ENCODE measurements at regions of chr9 and their contacts with region 1.

Region 1: GRCh38 chr9:91711755-91712601 is 238.1 kb downstream of the ROR2 start:
- DNase-seq: peak; percentile 54
- ATAC-seq: peak; percentile 94
- H3K4me3 Mint-ChIP-seq: no peak overlapping the region
- H3K27ac Mint-ChIP-seq: no peak overlapping the region
- H3K4me1 Mint-ChIP-seq: peaks cover 6% of the 10 kb centered on the region
- H3K27me3 Mint-ChIP-seq: no peaks in the 10 kb centered on the region
- CTCF ChIP-seq: no peak

Region 2: DNA sequence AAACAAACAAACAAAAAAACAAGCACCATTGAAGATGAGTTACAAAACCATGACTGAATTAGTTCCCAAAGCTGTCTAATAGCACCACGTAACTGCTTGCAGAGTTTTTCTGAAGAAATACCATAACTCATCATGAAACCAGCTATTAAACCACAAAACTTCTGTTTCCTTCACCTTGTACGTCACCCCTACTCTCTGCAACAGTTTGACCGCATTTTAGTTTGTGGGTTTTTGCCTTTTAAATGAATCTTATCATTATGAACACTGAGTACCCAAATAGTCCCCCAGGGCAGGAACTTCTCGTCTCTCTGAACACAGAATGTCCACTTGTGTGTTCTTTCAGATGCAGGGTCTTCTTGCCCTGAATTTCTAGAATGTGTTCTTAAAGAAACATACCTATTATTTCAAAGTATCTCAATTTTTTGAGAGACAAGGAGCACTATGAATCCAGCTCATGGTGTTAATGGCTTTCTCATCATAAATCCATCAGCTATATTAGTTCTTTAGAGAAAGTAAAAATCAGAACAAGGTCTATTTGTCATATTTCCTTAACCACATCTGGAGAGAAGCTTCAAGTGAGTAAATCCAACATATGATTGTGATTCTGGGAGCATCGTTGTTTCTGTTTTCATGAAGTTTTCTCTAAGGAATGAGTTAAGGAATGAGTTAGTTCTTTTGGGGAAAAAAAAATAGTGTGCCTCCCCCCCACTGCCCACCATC is 560.8 kb before region 1 on chr9:
- CTCF ChIA-PET with region 1: no interaction called
- POLR2A ChIA-PET with region 1: no interaction called
- intact Hi-C with region 1: loop called (anchors 2 kb)
- DNase-seq: no peak
- ATAC-seq: peak; percentile 77
- H3K4me3 Mint-ChIP-seq: peak overlapping the region; percentile 30
- H3K27ac Mint-ChIP-seq: peak overlapping the region; percentile 62
- H3K4me1 Mint-ChIP-seq: peaks cover 50% of the 10 kb centered on the region
- H3K27me3 Mint-ChIP-seq: no peaks in the 10 kb centered on the region
- CTCF ChIP-seq: no peak

Region 3: DNA sequence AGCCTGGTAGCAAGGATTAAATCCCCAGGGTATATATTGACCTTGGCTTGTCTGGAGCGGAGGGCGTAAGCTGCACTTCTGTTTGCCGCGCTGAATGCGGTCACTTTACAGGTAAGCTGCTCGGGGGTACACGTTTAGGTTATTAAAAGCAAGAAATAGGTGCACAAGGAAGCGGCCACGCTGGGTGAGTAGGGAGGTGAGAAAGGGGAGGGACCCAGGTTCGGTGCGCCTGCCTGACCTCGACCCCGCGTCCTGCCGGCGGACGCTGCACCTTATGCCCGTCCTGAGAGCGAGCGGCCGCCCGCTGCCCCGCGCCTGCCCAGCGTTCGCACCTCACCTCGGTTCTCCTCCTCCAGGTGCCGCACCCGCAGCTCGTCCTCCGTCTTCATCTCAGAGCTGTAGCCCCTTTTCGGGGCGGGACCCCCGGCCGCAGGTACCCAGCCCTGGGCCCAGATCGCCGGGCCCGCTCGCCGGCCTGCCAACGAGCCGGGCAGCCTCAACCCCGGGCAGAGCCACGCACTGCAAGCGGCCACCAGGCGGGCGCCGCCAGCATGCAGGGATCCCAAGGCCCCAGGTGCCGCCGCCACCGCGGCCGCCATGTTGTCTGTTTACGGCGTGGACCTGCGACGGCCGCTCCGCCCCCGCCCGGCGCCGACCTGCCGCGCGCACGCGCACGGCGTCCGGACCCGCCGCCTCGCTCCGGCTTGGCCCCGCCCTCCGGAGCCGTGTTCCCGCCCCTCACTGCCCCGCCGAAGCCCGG is 350.5 kb before region 1 on chr9 and contains the start of gene AUH:
- CTCF ChIA-PET with region 1: no interaction called
- POLR2A ChIA-PET with region 1: no interaction called
- intact Hi-C with region 1: loop called (anchors 5 kb)
- DNase-seq: peak; percentile 89
- ATAC-seq: peak; percentile 97
- H3K4me3 Mint-ChIP-seq: peak within 1 kb of the TSS; percentile 94
- H3K27ac Mint-ChIP-seq: peak within 1 kb of the TSS; percentile 89
- H3K4me1 Mint-ChIP-seq: peaks cover 34% of the 10 kb centered on the region
- H3K27me3 Mint-ChIP-seq: no peaks in the 10 kb centered on the region
- CTCF ChIP-seq: no peak
- total RNA-seq, gene AUH: 11.1 and 14.0 TPM in 2 replicates

Region 4: DNA sequence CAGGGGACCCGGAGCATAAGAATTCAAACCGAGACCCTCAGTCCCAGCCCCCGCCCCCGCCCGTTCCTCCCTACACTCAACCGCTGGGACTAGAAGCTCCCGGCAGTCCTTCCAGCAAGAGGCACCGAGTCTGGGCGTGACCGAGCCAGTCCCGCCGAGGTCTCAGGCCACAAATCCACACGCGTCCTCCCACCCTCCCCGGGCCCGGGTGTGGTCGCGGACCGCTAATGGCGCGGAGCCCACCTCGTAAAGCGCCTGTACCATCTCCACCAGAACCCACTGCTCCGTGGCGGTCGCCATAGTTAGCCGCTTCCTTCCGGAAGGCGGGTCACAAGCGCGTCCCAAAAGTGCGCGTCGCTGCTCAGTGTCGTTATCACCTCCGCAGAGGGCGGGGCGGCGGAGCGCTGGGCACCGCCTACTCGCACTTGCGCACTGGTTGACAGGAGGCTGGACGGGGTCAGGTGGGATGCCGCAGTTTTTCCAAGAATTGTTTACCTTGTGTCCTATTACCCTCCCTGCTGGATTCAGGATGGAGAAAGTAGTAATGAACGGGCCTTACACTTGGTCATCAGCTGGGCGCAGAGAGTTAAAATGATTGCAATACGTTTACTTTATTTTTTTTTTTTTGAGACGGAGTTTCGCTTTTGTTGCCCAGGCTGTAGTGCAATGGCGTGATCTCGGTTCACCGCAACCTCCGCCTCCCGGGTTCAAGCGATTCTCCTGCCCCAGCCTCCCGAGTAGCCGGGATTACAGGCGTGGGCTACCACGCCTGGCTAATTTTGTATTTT is 403.3 kb after region 1 on chr9 and contains the start of gene SPTLC1:
- CTCF ChIA-PET with region 1: no interaction called
- POLR2A ChIA-PET with region 1: no interaction called
- intact Hi-C with region 1: loop called (anchors 10 kb)
- DNase-seq: peak; percentile 93
- ATAC-seq: peak; percentile 98
- H3K4me3 Mint-ChIP-seq: peak within 1 kb of the TSS; percentile 100
- H3K27ac Mint-ChIP-seq: peak within 1 kb of the TSS; percentile 99
- H3K4me1 Mint-ChIP-seq: peaks cover 24% of the 10 kb centered on the region
- H3K27me3 Mint-ChIP-seq: no peaks in the 10 kb centered on the region
- CTCF ChIP-seq: no peak
- total RNA-seq, gene SPTLC1: 40.8 and 41.0 TPM in 2 replicates

Region 5: DNA sequence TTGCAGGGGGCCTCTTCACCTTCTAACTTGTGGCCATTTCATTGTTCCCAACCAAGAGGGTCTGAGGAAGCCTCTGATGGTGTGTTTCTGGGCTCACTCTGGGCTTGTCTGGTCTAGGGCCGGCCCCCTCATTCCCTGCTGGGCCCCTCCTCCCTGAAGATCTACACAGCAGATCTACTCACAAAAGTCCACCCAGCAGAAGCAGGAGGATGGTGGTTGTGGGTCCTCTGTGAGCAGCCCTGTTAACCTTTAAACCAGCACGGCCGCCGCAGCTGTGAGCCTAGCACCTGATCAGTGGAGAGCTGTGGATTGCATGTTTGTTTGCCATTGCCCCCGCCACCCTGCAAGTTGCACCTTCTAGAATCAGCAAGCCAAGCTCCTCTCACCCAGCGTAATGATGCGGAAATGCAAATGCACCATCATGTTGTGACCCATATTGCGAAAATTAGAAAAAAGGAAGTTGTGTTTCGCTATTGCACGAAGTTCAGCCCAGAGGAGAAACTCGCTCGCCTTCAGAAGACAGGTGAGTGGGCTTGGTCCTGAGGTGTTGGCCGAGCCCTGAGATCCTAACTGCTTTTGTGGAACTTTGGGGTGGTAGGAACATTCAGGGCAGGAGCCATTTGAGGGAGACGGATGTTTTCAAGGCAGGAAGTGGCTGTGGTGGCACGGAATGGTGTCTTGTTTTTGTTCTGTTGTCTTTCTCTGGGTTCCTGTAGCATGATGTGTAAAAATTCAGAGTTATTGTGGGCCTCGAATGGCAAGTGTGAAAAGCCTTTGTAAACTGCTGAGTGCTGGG is 1252.1 kb after region 1 on chr9:
- CTCF ChIA-PET with region 1: no interaction called
- POLR2A ChIA-PET with region 1: interaction called, 10 read pairs
- intact Hi-C with region 1: no loop called
- DNase-seq: peak; percentile 56
- ATAC-seq: peak; percentile 82
- H3K4me3 Mint-ChIP-seq: peak overlapping the region; percentile 94
- H3K27ac Mint-ChIP-seq: peak overlapping the region; percentile 99
- H3K4me1 Mint-ChIP-seq: peaks cover 69% of the 10 kb centered on the region
- H3K27me3 Mint-ChIP-seq: no peaks in the 10 kb centered on the region
- CTCF ChIP-seq: no peak

Region 6: GRCh38 chr9:93575796-93576257 is 1863.8 kb after region 1 on chr9:
- CTCF ChIA-PET with region 1: no interaction called
- POLR2A ChIA-PET with region 1: no interaction called
- intact Hi-C with region 1: loop called (anchors 10 kb)
- DNase-seq: no peak
- ATAC-seq: peak; percentile 38
- H3K4me3 Mint-ChIP-seq: peak overlapping the region; percentile 89
- H3K27ac Mint-ChIP-seq: peak overlapping the region; percentile 89
- H3K4me1 Mint-ChIP-seq: peaks cover 30% of the 10 kb centered on the region
- H3K27me3 Mint-ChIP-seq: no peaks in the 10 kb centered on the region
- CTCF ChIP-seq: no peak

Measured in activated B cell treated with CpG ODN at 0.5 μM for 24 hours (primary cell).